Psoas muscle (tissue), 8 donors: ENCODE measurements at regions of chr17 and their contacts with region 1.

Region 1: DNA sequence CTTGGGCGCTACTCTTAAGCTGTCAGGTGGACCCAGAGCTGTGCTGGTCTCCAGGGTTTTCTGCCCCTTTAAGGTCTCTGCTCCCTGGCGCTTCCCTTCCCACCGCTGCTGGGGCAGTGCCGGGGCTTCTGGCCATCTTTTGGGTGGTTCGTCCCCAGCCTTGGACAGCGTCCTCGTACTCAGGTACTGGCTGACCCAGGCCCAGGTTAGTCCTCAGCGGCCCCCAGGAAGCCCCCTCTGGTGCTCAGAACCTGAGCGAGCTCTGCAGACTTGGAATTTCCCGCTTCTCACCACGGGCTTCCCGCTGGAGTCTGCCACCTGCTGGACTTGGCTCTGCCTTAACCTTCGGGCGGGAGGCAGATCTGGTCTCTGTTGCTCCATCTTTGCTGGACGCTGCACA is 94.1 kb upstream of the ZNF750 start:
- DNase-seq: peak; percentile 4 to 56
- ATAC-seq: no peak
- H3K4me3 ChIP-seq: no peak overlapping the region
- H3K27ac ChIP-seq: no peak overlapping the region
- H3K4me1 ChIP-seq: no peaks in the 10 kb centered on the region
- H3K27me3 ChIP-seq: no peaks in the 10 kb centered on the region
- CTCF ChIP-seq: no peak

Region 2: GRCh38 chr17:82848022-82848592 is 85.8 kb before region 1 on chr17:
- intact Hi-C with region 1: loop called in 1 of 2 experiments (anchors 1 kb)
- DNase-seq: peak; percentile 57 to 79
- ATAC-seq: peak; percentile 58 to 65 (median 60)
- H3K4me3 ChIP-seq: peak overlapping the region; percentile 45
- H3K27ac ChIP-seq: peak overlapping the region; percentile 31
- H3K4me1 ChIP-seq: no peaks in the 10 kb centered on the region
- H3K27me3 ChIP-seq: no peaks in the 10 kb centered on the region
- CTCF ChIP-seq: no peak

Region 3: DNA sequence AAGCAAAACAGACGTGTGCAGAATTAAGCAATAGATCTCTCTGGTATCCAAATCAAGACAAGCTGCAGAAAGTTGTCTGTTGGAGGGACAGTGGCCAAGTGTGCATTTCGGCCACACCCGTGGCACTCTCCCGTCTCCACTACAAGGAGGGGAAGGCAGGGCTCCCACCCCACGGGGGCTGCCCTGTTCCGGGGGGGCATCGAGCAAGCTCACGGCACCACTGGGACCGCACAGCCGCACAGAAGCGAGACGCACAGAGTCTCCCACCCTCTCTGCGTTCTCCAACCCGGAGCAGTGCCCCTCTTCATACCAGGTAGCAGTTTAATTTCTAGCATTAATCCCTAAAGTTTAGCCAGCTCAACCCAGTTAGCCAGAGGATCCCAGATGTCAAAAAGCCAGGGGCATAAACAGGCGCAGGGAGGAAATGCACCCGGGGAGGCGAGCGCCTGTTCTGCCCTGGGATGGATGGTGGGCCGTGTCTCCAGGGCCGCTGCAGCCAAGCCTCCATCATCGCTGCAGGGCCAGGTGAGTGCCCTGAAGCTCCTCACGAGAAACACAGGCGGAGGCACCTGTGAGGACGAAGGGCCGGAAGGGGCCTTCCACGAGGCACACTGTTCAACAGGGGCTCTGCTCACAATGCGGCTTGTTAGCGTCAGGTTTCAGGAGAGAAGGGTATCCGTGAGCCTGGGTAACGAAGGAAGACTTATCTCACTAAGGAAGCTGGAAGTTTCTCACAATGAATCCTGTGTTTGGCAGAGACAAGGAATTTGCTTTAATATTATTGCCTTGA is 103.4 kb after region 1 on chr17:
- intact Hi-C with region 1: no loop called
- DNase-seq: no peak
- ATAC-seq: no peak
- H3K4me3 ChIP-seq: no peak overlapping the region
- H3K27ac ChIP-seq: no peak overlapping the region
- H3K4me1 ChIP-seq: no peaks in the 10 kb centered on the region
- H3K27me3 ChIP-seq: no peaks in the 10 kb centered on the region
- CTCF ChIP-seq: no peak